Right ventricle myocardium superior (tissue), 1 donor: ENCODE measurements at regions of chr4 and their contacts with region 1.

Region 1: DNA sequence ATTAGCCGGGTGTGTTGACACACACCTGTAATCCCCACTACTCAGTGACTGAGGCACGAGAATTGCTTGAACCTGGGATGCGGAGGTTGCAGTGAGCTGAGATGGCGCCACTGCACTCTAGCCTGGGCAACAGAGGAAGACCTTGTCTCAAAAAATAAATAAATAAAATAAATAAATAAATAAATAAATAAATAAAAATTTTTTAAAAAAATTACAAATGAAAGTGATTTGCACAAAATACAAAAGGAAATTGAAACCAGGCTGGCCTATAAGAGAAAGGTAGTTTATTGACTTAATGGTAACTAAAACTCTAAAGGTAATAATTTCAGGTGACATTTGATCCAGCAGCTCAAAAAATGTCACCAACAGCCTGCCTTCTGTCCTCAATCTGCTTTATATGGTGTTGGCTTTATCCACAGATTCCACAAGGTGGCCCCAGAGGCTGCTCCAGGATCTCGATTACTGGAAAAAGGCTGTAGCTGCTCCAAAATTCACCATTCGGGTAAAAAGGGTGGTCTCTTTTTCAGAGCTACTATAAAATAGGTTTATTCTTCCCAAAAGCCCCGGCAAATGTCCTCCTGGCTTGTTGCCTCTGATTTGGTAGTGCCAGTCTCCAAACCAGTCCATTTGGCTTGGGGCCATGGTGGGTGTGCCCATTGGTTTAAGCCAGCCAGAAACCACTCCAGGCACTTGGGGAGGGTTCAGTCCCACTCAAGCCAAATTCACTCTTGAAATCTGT is 61.4 kb upstream of the TRIM2 start:
- DNase-seq: peak; percentile 81
- ATAC-seq: peak; percentile 92

Region 2: GRCh38 chr4:152910521-152910920 is 232.3 kb before region 1 on chr4:
- intact Hi-C with region 1: no loop called
- DNase-seq: no peak
- ATAC-seq: no peak

Region 3: GRCh38 chr4:153204247-153205027 is 61.6 kb after region 1 on chr4 and contains the start of gene TRIM2:
- intact Hi-C with region 1: no loop called
- DNase-seq: peak; percentile 81
- ATAC-seq: peak; percentile 95
- total RNA-seq, gene TRIM2: 15.3 TPM

Region 4: GRCh38 chr4:153318696-153319320 is 175.9 kb after region 1 on chr4:
- intact Hi-C with region 1: loop called (anchors 2 kb)
- DNase-seq: no peak
- ATAC-seq: peak; percentile 87